ENCODE measurements at regions of chr4 and their contacts with region 1.

Region 1: GRCh38 chr4:107913281-107913899 is 18.0 kb upstream of the CYP2U1 start:
- DNase-seq: peak in 21 of 42 donors; percentile 4 to 81 (median 48)

Region 2: GRCh38 chr4:107757864-107758476 is 155.4 kb before region 1 on chr4:
- intact Hi-C with region 1: loop called (anchors 5 kb)
- DNase-seq: no peak